Activated B cell treated with CpG ODN at 0.5 μM for 24 hours (primary cell): ENCODE measurements at regions of chr21 and their contacts with region 1.

Region 1: GRCh38 chr21:29849735-29850176 is 90.0 kb downstream of the GRIK1 start:
- DNase-seq: no peak
- ATAC-seq: peak; percentile 97
- H3K4me3 Mint-ChIP-seq: no peak overlapping the region
- H3K27ac Mint-ChIP-seq: no peak overlapping the region
- H3K4me1 Mint-ChIP-seq: no peaks in the 10 kb centered on the region
- H3K27me3 Mint-ChIP-seq: peaks cover 1% of the 10 kb centered on the region
- CTCF ChIP-seq: no peak

Region 2: DNA sequence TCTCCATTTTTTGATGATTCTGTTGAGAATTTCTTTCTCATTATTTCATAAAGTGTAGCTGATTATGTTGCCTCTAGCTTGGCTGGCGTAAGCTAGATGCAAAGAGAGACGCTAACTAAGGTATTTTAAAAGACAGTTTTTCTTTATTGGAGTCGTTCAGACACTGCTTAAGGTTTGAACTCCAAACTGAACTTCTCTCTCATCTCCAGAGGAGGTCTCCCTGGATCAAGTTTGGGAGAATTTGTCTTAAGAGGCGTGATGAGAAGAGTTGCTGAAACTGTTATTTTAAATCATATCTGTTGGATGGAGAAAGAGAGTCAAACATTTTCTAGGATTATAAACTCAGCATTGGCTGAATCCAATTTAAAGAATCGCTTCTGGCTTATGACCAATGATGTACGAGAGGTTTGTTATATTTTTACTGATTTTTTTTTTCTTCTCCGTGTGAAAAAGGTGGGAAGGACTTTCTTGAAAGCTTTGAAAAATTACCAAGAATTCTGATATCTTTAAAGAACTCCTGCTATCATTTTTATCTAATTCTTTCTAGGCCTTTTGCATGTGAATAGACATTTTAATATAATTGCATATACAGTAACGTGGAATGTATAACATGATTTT is 685.3 kb before region 1 on chr21:
- CTCF ChIA-PET with region 1: no interaction called
- POLR2A ChIA-PET with region 1: no interaction called
- intact Hi-C with region 1: loop called (anchors 10 kb)
- DNase-seq: no peak
- ATAC-seq: peak; percentile 57
- H3K4me3 Mint-ChIP-seq: no peak overlapping the region
- H3K27ac Mint-ChIP-seq: no peak overlapping the region
- H3K4me1 Mint-ChIP-seq: peaks cover 7% of the 10 kb centered on the region
- H3K27me3 Mint-ChIP-seq: no peaks in the 10 kb centered on the region
- CTCF ChIP-seq: no peak

Region 3: GRCh38 chr21:29477941-29478340 is 371.8 kb before region 1 on chr21:
- CTCF ChIA-PET with region 1: interaction called, 47 read pairs
- POLR2A ChIA-PET with region 1: no interaction called
- intact Hi-C with region 1: loop called (anchors 1 kb)
- DNase-seq: no peak
- ATAC-seq: no peak
- H3K4me3 Mint-ChIP-seq: no peak overlapping the region
- H3K27ac Mint-ChIP-seq: no peak overlapping the region
- H3K4me1 Mint-ChIP-seq: peaks cover 9% of the 10 kb centered on the region
- H3K27me3 Mint-ChIP-seq: no peaks in the 10 kb centered on the region
- CTCF ChIP-seq: no peak

Region 4: GRCh38 chr21:29800056-29800455 is 49.7 kb before region 1 on chr21:
- CTCF ChIA-PET with region 1: no interaction called
- POLR2A ChIA-PET with region 1: no interaction called
- intact Hi-C with region 1: no loop called
- DNase-seq: no peak
- ATAC-seq: no peak
- H3K4me3 Mint-ChIP-seq: no peak overlapping the region
- H3K27ac Mint-ChIP-seq: no peak overlapping the region
- H3K4me1 Mint-ChIP-seq: no peaks in the 10 kb centered on the region
- H3K27me3 Mint-ChIP-seq: peaks cover 2% of the 10 kb centered on the region
- CTCF ChIP-seq: no peak